Tibial artery (tissue), 4 donors: ENCODE measurements at regions of chrX and their contacts with region 1.

Region 1: GRCh38 chrX:154019633-154020528 is at the start of gene IRAK1:
- DNase-seq: peak; percentile 48 to 79
- H3K4me3 ChIP-seq: peak within 1 kb of the TSS; percentile 57 to 70
- H3K27ac ChIP-seq: peak within 1 kb of the TSS; percentile 80 to 88
- H3K4me1 ChIP-seq: peaks cover 0 to 23% (median 12%) of the 10 kb centered on the region in 4 donors
- H3K27me3 ChIP-seq: no peaks in the 10 kb centered on the region
- CTCF ChIP-seq: peak in 1 of 2 experiments; percentile 10

Region 2: GRCh38 chrX:153954558-153955227 is 65.2 kb before region 1 on chrX:
- intact Hi-C with region 1: no loop called
- DNase-seq: no peak
- H3K4me3 ChIP-seq: peak overlapping the region in 1 of 2 donors; percentile 39
- H3K27ac ChIP-seq: peak overlapping the region; percentile 85 to 88
- H3K4me1 ChIP-seq: peaks cover 0 to 15% (median 10%) of the 10 kb centered on the region in 4 donors
- H3K27me3 ChIP-seq: no peaks in the 10 kb centered on the region
- CTCF ChIP-seq: no peak

Region 3: DNA sequence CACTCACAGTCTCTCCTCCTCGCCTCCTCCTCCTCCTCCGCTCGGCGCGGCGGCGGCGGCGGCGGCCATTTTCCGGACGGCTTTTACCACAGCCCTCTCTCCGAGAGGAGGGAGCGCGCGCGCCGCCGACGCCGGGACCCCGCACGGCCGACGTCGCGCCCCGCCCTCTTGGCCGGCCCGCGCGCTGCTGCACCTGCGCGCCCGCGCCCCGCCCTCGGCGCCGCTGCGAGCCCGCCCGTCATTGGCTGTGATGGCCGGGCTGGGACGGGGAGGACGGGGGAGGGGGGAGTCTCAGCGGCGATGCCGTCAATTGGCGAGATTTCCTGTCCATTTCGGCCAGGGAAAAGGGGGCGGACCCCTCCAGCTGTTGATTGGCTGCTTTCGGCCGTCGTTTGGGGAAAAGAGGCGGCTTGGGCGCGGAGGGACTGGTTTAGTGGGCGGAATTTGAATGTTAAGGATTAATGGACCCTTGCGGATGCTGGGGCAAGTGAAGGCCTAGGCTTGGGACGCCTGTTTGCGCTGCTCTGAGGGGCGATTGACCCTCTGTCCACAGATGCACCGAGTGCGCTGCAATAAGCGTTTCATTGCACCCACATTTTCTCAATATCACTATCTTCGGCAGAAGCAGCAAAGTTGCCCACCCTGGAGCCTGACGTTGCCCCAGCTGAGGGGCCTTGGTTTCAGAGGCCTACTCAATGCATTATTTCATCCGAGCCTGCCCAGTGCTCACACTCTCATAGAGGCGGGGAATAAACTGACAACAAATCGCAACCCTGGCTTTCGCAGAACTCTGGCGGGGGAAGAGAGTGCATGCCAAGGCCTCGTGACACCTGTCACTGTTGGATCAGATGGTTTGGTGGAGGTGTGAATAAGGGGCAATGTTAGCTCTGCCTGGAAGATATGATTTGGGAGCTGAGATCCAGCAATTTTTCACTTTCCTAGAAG is 78.0 kb after region 1 on chrX and contains the start of gene MECP2:
- intact Hi-C with region 1: loop called (anchors 5 kb)
- DNase-seq: peak; percentile 89 to 95
- H3K4me3 ChIP-seq: peak within 1 kb of the TSS; percentile 89 to 91
- H3K27ac ChIP-seq: peak within 1 kb of the TSS; percentile 99
- H3K4me1 ChIP-seq: peaks cover 0 to 32% (median 8%) of the 10 kb centered on the region in 4 donors
- H3K27me3 ChIP-seq: no peaks in the 10 kb centered on the region
- CTCF ChIP-seq: no peak